CD8-positive, alpha-beta T cell (primary cell): ENCODE measurements at regions of chr5 and their contacts with region 1.

Region 1: DNA sequence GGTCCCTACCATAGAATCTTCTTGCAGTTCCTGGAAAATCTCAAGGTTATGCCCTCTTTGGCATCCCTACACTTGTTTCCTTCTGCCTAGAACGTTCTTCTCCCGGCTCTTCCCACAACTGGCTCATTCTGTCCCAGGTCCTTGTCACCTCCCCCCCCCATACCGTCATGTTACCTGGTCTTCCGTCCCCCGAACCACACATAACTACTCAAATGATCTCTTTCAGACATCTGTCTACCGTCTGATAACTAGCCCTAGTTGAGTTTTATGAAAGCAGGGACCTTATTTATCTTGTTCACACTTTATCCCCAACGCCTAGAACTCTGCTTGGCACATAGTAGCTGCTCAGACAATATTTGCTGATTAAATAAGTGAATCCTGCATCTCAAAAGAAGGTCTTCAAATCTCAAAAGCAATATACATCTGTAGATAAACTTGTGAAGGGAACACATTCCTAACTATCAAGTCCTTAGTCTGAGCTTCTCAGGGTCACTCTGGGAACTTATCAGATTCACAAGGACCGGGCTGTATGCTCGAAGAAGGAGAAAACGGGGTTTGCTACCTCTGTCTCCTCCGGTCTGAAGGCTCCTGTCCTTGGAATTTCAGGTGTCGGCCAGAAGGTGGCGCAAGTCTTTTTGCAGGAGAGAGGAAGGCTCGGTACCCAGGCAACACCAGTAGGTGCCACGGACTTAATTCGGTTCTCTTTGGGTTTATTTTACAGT is 30.0 kb downstream of the LCP2 start:
- DNase-seq: peak; percentile 65 to 93 (median 86)
- ATAC-seq: peak; percentile 52
- H3K4me3 ChIP-seq: peak overlapping the region in 1 of 2 experiments; percentile 9
- H3K4me3 Mint-ChIP-seq: peak overlapping the region; percentile 69
- H3K27ac ChIP-seq: peak overlapping the region; percentile 8 to 77
- H3K27ac Mint-ChIP-seq: peak overlapping the region; percentile 98
- H3K4me1 ChIP-seq: peaks cover 90% of the 10 kb centered on the region
- H3K4me1 Mint-ChIP-seq: peaks cover 96% of the 10 kb centered on the region
- H3K27me3 ChIP-seq: no peaks in the 10 kb centered on the region
- H3K27me3 Mint-ChIP-seq: no peaks in the 10 kb centered on the region
- CTCF ChIP-seq: peak; percentile 87

Region 2: GRCh38 chr5:170247363-170247762 is 20.2 kb before region 1 on chr5:
- CTCF ChIA-PET with region 1: interaction called, 14 read pairs
- POLR2A ChIA-PET with region 1: interaction called, 4 read pairs
- intact Hi-C with region 1: loop called in 1 of 2 experiments (anchors 1 kb)
- DNase-seq: no peak
- ATAC-seq: no peak
- H3K4me3 ChIP-seq: no peak overlapping the region
- H3K4me3 Mint-ChIP-seq: no peak overlapping the region
- H3K27ac ChIP-seq: no peak overlapping the region
- H3K27ac Mint-ChIP-seq: peak overlapping the region; percentile 41
- H3K4me1 ChIP-seq: peaks cover 8% of the 10 kb centered on the region
- H3K4me1 Mint-ChIP-seq: peaks cover 32% of the 10 kb centered on the region
- H3K27me3 ChIP-seq: no peaks in the 10 kb centered on the region
- H3K27me3 Mint-ChIP-seq: no peaks in the 10 kb centered on the region
- CTCF ChIP-seq: no peak

Region 3: DNA sequence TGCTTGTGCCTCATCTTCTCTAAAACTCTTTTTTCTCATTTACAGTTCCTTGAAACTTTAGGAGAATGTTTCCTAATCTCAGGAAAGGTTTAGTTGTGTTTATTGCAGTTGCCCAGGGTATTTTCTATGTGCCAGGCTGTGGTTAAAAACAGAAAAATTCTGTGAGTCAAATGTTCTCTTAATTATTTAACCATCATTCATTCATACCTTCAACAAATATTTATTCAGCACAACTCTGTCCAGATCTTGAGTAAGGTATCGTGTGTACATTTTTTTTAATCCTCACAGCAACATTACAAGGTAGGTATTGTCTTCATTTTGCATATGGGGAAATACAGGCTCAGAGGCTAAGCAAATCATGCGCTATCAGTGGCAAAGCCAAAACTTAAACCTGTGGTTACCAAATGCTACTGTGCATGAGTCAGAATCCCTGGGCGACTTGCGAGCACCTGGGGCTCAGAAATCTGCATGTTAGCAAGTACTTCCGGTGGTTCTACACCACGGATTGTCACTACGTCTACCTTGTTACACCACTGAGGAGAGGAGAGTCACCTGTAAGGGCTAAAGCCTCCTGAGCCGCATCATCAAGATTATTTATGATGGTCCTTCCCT is 13.6 kb before region 1 on chr5:
- CTCF ChIA-PET with region 1: interaction called, 10 read pairs
- POLR2A ChIA-PET with region 1: interaction called, 3 read pairs
- intact Hi-C with region 1: loop called in 1 of 2 experiments (anchors 1 kb)
- DNase-seq: peak; percentile 44 to 92 (median 73)
- ATAC-seq: peak; percentile 95
- H3K4me3 ChIP-seq: no peak overlapping the region
- H3K4me3 Mint-ChIP-seq: peak overlapping the region; percentile 16
- H3K27ac ChIP-seq: peak overlapping the region; percentile 38 to 61
- H3K27ac Mint-ChIP-seq: peak overlapping the region; percentile 95
- H3K4me1 ChIP-seq: peaks cover 39% of the 10 kb centered on the region
- H3K4me1 Mint-ChIP-seq: peaks cover 77% of the 10 kb centered on the region
- H3K27me3 ChIP-seq: no peaks in the 10 kb centered on the region
- H3K27me3 Mint-ChIP-seq: no peaks in the 10 kb centered on the region
- CTCF ChIP-seq: no peak

Region 4: DNA sequence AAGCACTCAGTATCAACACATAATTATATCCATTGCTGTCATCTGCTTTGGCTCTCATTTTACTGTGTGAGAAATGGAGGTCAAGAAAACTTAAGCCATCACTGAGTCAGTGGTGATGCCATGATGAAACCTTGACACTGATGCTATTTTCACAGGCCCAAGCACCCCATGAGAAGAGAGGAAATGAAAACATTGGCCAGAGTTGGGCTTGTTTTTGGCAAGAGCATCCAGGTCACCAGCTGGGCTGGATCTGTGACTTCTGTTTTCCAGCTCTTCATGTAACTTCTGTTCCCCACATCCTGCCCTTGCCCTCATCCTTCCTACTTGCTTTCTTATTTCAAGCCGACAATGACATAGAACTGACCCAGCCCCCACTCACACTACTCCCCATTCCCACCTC is 19.9 kb after region 1 on chr5:
- CTCF ChIA-PET with region 1: interaction called, 385 read pairs
- POLR2A ChIA-PET with region 1: interaction called, 494 read pairs
- intact Hi-C with region 1: no loop called
- DNase-seq: peak in 1 of 9 experiments; percentile 48
- ATAC-seq: peak; percentile 3
- H3K4me3 ChIP-seq: no peak overlapping the region
- H3K4me3 Mint-ChIP-seq: peak overlapping the region; percentile 68
- H3K27ac ChIP-seq: peak overlapping the region in 1 of 2 experiments; percentile 86
- H3K27ac Mint-ChIP-seq: peak overlapping the region; percentile 97
- H3K4me1 ChIP-seq: peaks cover 99% of the 10 kb centered on the region
- H3K4me1 Mint-ChIP-seq: peaks cover 100% of the 10 kb centered on the region
- H3K27me3 ChIP-seq: no peaks in the 10 kb centered on the region
- H3K27me3 Mint-ChIP-seq: no peaks in the 10 kb centered on the region
- CTCF ChIP-seq: no peak

Region 5: GRCh38 chr5:170293273-170293672 is 25.7 kb after region 1 on chr5:
- CTCF ChIA-PET with region 1: interaction called, 385 read pairs
- POLR2A ChIA-PET with region 1: interaction called, 494 read pairs
- intact Hi-C with region 1: loop called in 1 of 2 experiments (anchors 1 kb)
- DNase-seq: peak in 6 of 9 experiments; percentile 53 to 86 (median 72)
- ATAC-seq: peak; percentile 29
- H3K4me3 ChIP-seq: peak overlapping the region; percentile 87 to 94
- H3K4me3 Mint-ChIP-seq: peak overlapping the region; percentile 99
- H3K27ac ChIP-seq: peak overlapping the region in 1 of 2 experiments; percentile 86
- H3K27ac Mint-ChIP-seq: peak overlapping the region; percentile 97
- H3K4me1 ChIP-seq: peaks cover 73% of the 10 kb centered on the region
- H3K4me1 Mint-ChIP-seq: peaks cover 82% of the 10 kb centered on the region
- H3K27me3 ChIP-seq: no peaks in the 10 kb centered on the region
- H3K27me3 Mint-ChIP-seq: no peaks in the 10 kb centered on the region
- CTCF ChIP-seq: no peak

Region 6: DNA sequence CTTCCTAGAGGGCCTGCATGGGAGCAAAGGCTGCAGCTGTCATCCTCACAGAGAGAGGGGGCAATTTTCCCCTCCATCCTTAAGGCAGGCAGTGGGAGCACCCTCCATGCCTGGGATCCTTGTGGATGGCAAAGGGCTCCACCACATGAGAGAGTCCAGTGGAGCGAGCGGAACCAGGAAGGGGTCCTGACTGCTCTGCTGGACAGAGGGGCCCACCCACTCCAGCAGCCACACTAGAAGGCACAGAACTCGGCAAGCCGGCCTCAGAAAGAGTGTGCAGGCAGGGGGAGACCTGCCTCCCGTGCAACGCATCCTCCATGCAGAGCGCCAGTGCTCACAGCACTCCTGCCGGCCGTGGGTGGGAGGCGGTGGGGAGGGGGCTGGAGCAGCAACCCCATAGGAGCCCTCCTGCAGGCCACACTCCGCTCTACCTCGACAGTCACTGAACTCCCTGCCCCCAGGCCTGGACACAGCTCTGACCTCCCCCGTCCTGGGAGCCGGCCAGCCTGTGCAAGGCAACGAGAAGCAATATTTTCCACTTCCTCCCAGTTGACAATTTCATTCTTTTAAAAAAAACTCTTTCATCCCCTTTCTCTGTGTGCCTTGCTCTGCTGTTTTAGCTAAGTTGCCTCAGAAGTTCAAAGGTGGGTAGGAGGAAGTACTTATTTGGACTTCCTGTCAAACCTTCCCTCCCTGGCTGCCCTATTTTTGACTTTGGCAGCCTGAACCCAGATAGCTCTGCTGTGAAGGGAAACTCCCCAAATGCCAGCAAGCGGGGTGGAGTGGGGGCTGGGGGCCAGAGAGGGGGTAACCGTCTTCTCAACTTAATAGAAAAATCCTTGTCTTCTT is 35.3 kb after region 1 on chr5:
- CTCF ChIA-PET with region 1: interaction called, 385 read pairs
- POLR2A ChIA-PET with region 1: interaction called, 494 read pairs
- intact Hi-C with region 1: loop called in 1 of 2 experiments (anchors 5 kb)
- DNase-seq: peak; percentile 28 to 96 (median 68)
- ATAC-seq: peak; percentile 90
- H3K4me3 ChIP-seq: peak overlapping the region; percentile 42 to 60
- H3K4me3 Mint-ChIP-seq: peak overlapping the region; percentile 86
- H3K27ac ChIP-seq: peak overlapping the region; percentile 46 to 69
- H3K27ac Mint-ChIP-seq: peak overlapping the region; percentile 96
- H3K4me1 ChIP-seq: peaks cover 65% of the 10 kb centered on the region
- H3K4me1 Mint-ChIP-seq: peaks cover 84% of the 10 kb centered on the region
- H3K27me3 ChIP-seq: no peaks in the 10 kb centered on the region
- H3K27me3 Mint-ChIP-seq: no peaks in the 10 kb centered on the region
- CTCF ChIP-seq: peak; percentile 27

Region 7: GRCh38 chr5:170420780-170421412 is 153.3 kb after region 1 on chr5:
- CTCF ChIA-PET with region 1: interaction called, 8 read pairs
- POLR2A ChIA-PET with region 1: no interaction called
- intact Hi-C with region 1: loop called in 1 of 2 experiments (anchors 2 kb)
- DNase-seq: peak; percentile 22 to 75 (median 48)
- ATAC-seq: peak; percentile 58
- H3K4me3 ChIP-seq: no peak overlapping the region
- H3K4me3 Mint-ChIP-seq: no peak overlapping the region
- H3K27ac ChIP-seq: no peak overlapping the region
- H3K27ac Mint-ChIP-seq: no peak overlapping the region
- H3K4me1 ChIP-seq: peaks cover 18% of the 10 kb centered on the region
- H3K4me1 Mint-ChIP-seq: peaks cover 25% of the 10 kb centered on the region
- H3K27me3 ChIP-seq: no peaks in the 10 kb centered on the region
- H3K27me3 Mint-ChIP-seq: no peaks in the 10 kb centered on the region
- CTCF ChIP-seq: peak; percentile 79